ENCODE measurements at regions of chr16 and their contacts with region 1.

Region 1: GRCh38 chr16:55323637-55324490 is at the start of gene IRX6:
- DNase-seq: peak; percentile 87
- total RNA-seq, gene IRX6: 37.1 TPM

Region 2: DNA sequence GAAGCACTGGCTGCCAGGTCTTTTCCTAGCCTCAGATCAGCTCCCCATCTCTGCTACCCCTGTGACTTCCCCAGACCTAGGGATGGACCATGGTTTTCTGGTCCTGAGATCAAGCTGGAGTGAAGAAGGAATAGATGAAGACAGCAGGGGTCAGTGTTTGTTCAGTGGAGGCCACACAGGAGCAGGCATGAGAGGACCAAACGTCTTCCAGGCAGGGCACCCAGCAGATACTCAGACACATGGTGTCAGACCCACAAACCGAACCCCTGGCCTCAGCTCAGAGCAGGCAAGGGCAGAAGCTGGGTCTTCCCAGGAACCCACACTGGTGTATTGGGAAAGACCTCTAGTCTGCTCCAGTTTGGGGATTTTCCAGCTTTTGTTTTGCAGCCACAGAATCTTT is 203.5 kb before region 1 on chr16:
- intact Hi-C with region 1: loop called (anchors 5 kb)
- DNase-seq: no peak

Region 3: DNA sequence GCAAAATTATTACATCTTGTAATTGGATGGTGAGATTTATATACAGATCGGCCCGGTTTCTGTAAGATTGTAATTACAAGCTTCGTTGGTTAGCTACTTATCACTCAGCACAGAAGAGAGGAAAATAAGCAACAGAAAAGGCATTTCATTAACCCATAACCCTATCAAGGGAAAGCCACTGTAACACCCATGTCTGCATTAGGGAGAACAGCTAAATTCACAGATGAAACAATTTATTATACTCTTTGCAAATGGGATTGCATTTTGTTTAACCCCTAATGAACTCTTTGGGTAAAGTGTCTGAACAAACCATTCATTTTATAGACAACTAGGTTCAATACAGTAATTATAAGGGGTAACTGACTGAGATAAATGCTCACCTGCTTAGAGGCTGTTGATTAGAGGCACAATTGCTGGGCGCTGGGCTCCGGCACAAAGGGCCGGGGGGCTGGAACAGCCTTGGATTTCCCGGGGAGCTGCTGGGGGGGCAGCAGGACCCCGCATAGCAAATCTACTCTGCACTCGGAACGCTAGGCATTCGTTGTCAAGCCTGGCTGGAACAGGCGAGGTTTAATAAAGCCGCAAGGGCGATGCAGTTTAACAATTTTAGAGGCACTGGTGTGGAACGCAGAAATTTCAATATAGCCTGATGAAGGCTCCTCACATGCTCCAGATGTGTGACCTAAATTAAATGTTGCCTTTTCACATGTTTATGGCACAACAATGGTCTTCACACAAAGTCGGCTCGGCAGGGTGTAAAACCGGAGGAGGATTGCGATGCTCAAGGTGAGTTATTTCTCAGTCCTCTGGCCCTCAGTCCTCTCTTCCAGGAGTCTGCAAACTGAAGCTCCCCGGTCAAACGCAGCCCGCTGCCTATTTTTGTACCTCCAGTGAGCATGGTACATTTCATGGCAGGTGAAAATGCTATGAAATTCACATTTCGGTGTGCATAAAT is 133.9 kb before region 1 on chr16:
- intact Hi-C with region 1: no loop called
- DNase-seq: no peak